Activated T-helper 2 cell treated with anti-CD3 and anti-CD28 coated beads, Interferon-gamma antibody, Interleukin-2, Interleukin-4, amounts not matched to agents 10 μg/mL and 5 μg/mL and 100 μg/mL, durations not matched to agents 14 hours and 24 hours and 36 hours (primary cell): ENCODE measurements at regions of chr17 and their contacts with region 1.

Region 1: DNA sequence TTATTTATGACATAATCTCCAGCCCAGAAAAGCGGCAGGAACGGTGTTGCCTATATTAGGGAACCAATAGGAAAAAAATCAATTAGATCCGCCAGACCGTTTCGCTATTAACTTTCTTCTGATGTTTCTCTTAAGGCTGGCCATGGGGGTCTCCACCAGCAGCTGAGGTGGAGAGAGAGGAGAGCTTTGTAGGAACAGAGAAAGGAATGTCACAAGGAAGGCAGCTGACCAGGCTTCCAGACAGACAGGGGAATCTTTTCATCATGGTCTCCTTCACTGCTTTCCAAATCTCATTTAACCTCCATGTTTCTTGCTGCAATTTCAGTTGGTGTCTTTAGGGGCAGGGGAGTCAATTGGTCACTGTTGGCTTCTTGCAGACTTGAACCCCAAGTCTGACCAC is 8.9 kb upstream of the SEZ6 start:
- DNase-seq: no peak
- H3K4me3 Mint-ChIP-seq: no peak overlapping the region
- H3K27ac Mint-ChIP-seq: no peak overlapping the region
- H3K4me1 Mint-ChIP-seq: peaks cover 5% of the 10 kb centered on the region
- H3K27me3 Mint-ChIP-seq: peaks cover 27% of the 10 kb centered on the region

Region 2: DNA sequence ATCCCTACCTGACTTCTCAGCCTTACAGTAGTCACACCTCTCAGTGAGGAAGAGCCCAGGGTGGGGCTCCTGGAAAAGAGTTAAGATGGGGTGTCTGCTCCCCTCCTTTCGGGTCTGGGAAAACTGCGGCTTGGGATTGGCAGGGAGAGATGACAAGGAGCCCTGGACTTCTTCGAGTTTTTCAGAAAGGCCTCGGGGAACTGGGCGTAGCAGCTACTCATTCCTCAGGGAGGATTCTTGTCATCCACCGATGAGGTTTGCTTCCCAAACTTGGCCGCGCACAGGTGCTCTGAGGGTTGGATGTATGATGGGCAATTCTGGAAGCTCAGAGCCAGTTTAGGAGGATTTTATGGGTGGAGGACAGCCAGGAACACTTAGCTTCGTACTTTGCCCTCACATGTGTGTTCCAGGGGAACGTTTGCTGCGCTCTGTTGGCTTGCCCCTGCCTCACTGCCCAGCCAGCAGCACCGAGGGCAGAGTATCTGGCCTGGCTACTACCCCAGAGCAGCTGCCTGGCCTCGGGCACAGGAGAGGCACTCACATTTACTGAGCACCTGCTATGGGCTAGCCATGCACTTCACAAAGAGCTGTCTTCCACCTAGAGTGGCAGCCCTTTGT is 23.0 kb before region 1 on chr17:
- intact Hi-C with region 1: loop called (anchors 2 kb)
- DNase-seq: no peak
- H3K4me3 Mint-ChIP-seq: no peak overlapping the region
- H3K27ac Mint-ChIP-seq: no peak overlapping the region
- H3K4me1 Mint-ChIP-seq: no peaks in the 10 kb centered on the region
- H3K27me3 Mint-ChIP-seq: peaks cover 2% of the 10 kb centered on the region